Naive thymus-derived CD4-positive, alpha-beta T cell (primary cell): ENCODE measurements at regions of chr11 and their contacts with region 1.

Region 1: DNA sequence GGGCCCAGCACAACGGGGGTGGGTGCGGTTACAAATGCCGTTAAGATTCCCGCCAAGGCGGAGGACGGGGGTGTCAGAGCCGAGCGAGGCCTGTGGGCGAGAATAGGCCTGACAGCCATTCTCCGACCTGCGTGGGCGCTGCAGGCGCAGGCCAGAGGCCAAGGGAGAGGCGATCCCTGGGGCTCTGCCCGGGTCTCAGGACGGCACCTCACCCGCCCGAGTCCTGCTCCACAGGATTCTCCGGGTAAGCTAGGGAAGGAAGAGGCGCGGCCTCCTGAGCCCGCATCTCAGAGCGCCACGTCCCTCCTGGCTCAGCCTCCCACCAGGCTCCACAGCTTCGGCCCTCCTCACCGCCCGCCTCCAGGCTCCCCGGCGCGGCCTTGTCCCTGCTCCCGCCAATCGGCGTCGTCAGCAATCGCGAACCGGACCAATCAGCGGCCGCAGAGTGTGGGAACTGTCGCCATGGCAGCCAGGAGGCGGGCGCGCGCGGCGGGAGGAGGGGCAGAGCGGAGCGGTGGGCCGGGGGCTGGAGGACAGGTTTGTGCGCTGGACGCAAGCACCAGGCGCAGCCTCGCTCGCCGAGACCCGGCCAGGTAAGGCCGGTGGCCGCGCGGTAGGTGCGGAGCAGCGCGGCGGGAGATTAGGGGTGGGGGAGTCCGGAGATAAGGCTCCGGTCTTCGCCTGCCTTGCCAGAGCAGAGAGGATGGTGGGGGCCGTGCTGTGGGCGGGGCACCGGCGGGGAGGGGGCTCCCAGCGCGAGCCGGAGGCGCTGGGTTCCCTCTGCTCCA is at the start of gene NUCB2:
- DNase-seq: peak; percentile 92 to 98 (median 95)
- ATAC-seq: peak; percentile 96
- H3K4me3 ChIP-seq: peak within 1 kb of the TSS; percentile 78
- H3K4me3 Mint-ChIP-seq: peak within 1 kb of the TSS; percentile 83 to 99 (median 93)
- H3K27ac ChIP-seq: peak within 1 kb of the TSS; percentile 90
- H3K27ac Mint-ChIP-seq: peak within 1 kb of the TSS; percentile 88 to 93 (median 91)
- H3K4me1 ChIP-seq: peaks cover 17 to 28% of the 10 kb centered on the region in 2 donors
- H3K4me1 Mint-ChIP-seq: peaks cover 19 to 48% (median 38%) of the 10 kb centered on the region in 7 donors
- H3K27me3 ChIP-seq: no peaks in the 10 kb centered on the region
- H3K27me3 Mint-ChIP-seq: no peaks in the 10 kb centered on the region
- total RNA-seq, gene NUCB2: 72.0 to 171 (median 145) TPM

Region 2: DNA sequence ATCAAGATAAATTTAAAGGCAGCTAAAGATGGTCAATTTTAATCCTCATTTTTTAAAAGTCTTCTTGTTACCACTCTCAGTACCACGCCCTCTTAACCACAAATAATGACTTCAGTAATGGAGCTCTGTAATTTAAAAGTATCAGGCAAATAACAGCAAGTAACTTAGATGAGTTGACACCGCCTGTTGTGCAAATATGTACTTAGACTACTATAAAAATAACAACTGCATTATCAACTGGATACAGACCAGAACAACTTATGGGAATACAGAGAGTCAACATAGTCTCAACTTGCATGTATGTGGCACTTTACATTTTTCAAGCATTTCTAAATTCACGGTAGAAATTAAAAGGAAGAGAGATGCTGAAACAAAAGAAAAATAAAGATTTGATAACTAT is 788.7 kb before region 1 on chr11:
- CTCF ChIA-PET with region 1: no interaction called
- POLR2A ChIA-PET with region 1: no interaction called
- intact Hi-C with region 1: no loop called
- DNase-seq: no peak
- ATAC-seq: no peak
- H3K4me3 ChIP-seq: no peak overlapping the region
- H3K4me3 Mint-ChIP-seq: no peak overlapping the region
- H3K27ac ChIP-seq: no peak overlapping the region
- H3K27ac Mint-ChIP-seq: no peak overlapping the region
- H3K4me1 ChIP-seq: no peaks in the 10 kb centered on the region
- H3K4me1 Mint-ChIP-seq: peaks cover 0 to 2% (median 0%) of the 10 kb centered on the region in 7 donors
- H3K27me3 ChIP-seq: no peaks in the 10 kb centered on the region
- H3K27me3 Mint-ChIP-seq: no peaks in the 10 kb centered on the region

Region 3: GRCh38 chr11:17207317-17208258 is 68.8 kb before region 1 on chr11 and contains the start of gene PIK3C2A:
- CTCF ChIA-PET with region 1: no interaction called
- POLR2A ChIA-PET with region 1: interaction called, 7 read pairs
- intact Hi-C with region 1: loop called (anchors 1 kb)
- DNase-seq: peak; percentile 84 to 94 (median 91)
- ATAC-seq: peak; percentile 98
- H3K4me3 ChIP-seq: peak within 1 kb of the TSS; percentile 93
- H3K4me3 Mint-ChIP-seq: peak within 1 kb of the TSS; percentile 90 to 99 (median 98)
- H3K27ac ChIP-seq: peak within 1 kb of the TSS; percentile 93
- H3K27ac Mint-ChIP-seq: peak within 1 kb of the TSS; percentile 87 to 99 (median 97)
- H3K4me1 ChIP-seq: peaks cover 15 to 19% of the 10 kb centered on the region in 2 donors
- H3K4me1 Mint-ChIP-seq: peaks cover 34 to 57% (median 48%) of the 10 kb centered on the region in 7 donors
- H3K27me3 ChIP-seq: no peaks in the 10 kb centered on the region
- H3K27me3 Mint-ChIP-seq: no peaks in the 10 kb centered on the region
- total RNA-seq, gene PIK3C2A: 25.4 to 56.4 (median 42.0) TPM

Region 4: GRCh38 chr11:17238391-17238790 is 38.0 kb before region 1 on chr11:
- CTCF ChIA-PET with region 1: no interaction called
- POLR2A ChIA-PET with region 1: no interaction called
- intact Hi-C with region 1: no loop called
- DNase-seq: no peak
- ATAC-seq: no peak
- H3K4me3 ChIP-seq: no peak overlapping the region
- H3K4me3 Mint-ChIP-seq: no peak overlapping the region
- H3K27ac ChIP-seq: no peak overlapping the region
- H3K27ac Mint-ChIP-seq: no peak overlapping the region
- H3K4me1 ChIP-seq: no peaks in the 10 kb centered on the region
- H3K4me1 Mint-ChIP-seq: peaks cover 0 to 14% (median 3%) of the 10 kb centered on the region in 7 donors
- H3K27me3 ChIP-seq: no peaks in the 10 kb centered on the region
- H3K27me3 Mint-ChIP-seq: peaks cover 0 to 68% (median 0%) of the 10 kb centered on the region in 5 donors

Region 5: GRCh38 chr11:17287058-17287457 is 10.6 kb after region 1 on chr11:
- CTCF ChIA-PET with region 1: interaction called, 3 read pairs
- POLR2A ChIA-PET with region 1: interaction called, 81 read pairs
- intact Hi-C with region 1: loop called (anchors 1 kb)
- DNase-seq: peak in 1 of 9 donors; percentile 7
- ATAC-seq: no peak
- H3K4me3 ChIP-seq: no peak overlapping the region
- H3K4me3 Mint-ChIP-seq: peak overlapping the region in 9 of 10 donors; percentile 11 to 69 (median 51)
- H3K27ac ChIP-seq: peak overlapping the region; percentile 63
- H3K27ac Mint-ChIP-seq: peak overlapping the region; percentile 52 to 94 (median 88)
- H3K4me1 ChIP-seq: peaks cover 37 to 39% of the 10 kb centered on the region in 2 donors
- H3K4me1 Mint-ChIP-seq: peaks cover 33 to 73% (median 56%) of the 10 kb centered on the region in 7 donors
- H3K27me3 ChIP-seq: no peaks in the 10 kb centered on the region
- H3K27me3 Mint-ChIP-seq: no peaks in the 10 kb centered on the region

Region 6: DNA sequence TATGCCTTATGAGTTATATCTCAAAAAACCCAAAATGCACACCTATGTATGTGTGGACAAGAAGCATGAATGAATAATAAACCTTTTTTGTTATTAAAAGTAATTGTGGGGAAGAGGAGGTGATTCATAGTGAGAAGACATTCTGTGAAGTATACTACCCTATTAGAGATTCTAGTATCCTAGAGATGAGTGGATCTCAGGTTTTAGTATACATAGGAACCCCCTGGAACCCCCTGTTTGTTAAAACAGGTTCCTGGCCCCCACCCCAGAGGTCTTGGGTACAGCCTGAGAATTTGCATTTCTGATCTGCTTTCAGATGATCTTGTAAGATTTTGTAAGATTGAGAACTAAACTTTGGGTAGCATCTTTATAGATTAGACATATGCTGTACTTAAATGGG is 17.6 kb after region 1 on chr11:
- CTCF ChIA-PET with region 1: no interaction called
- POLR2A ChIA-PET with region 1: interaction called, 81 read pairs
- intact Hi-C with region 1: loop called in 1 of 2 experiments (anchors 2 kb)
- DNase-seq: no peak
- ATAC-seq: no peak
- H3K4me3 ChIP-seq: no peak overlapping the region
- H3K4me3 Mint-ChIP-seq: no peak overlapping the region
- H3K27ac ChIP-seq: peak overlapping the region; percentile 9
- H3K27ac Mint-ChIP-seq: peak overlapping the region in 8 of 9 donors; percentile 40 to 81 (median 58)
- H3K4me1 ChIP-seq: peaks cover 3 to 11% of the 10 kb centered on the region in 2 donors
- H3K4me1 Mint-ChIP-seq: peaks cover 15 to 69% (median 57%) of the 10 kb centered on the region in 7 donors
- H3K27me3 ChIP-seq: no peaks in the 10 kb centered on the region
- H3K27me3 Mint-ChIP-seq: no peaks in the 10 kb centered on the region

Region 7: GRCh38 chr11:17389211-17389956 is 113.0 kb after region 1 on chr11:
- CTCF ChIA-PET with region 1: no interaction called
- POLR2A ChIA-PET with region 1: no interaction called
- intact Hi-C with region 1: loop called in 1 of 2 experiments (anchors 1 kb)
- DNase-seq: peak; percentile 57 to 87 (median 80)
- ATAC-seq: peak; percentile 96
- H3K4me3 ChIP-seq: peak overlapping the region; percentile 62
- H3K4me3 Mint-ChIP-seq: peak overlapping the region; percentile 77 to 90 (median 83)
- H3K27ac ChIP-seq: peak overlapping the region; percentile 66
- H3K27ac Mint-ChIP-seq: peak overlapping the region in 7 of 9 donors; percentile 12 to 84 (median 55)
- H3K4me1 ChIP-seq: peaks cover 0 to 4% of the 10 kb centered on the region in 2 donors
- H3K4me1 Mint-ChIP-seq: peaks cover 0 to 9% (median 5%) of the 10 kb centered on the region in 7 donors
- H3K27me3 ChIP-seq: no peaks in the 10 kb centered on the region
- H3K27me3 Mint-ChIP-seq: peaks cover 0 to 16% (median 0%) of the 10 kb centered on the region in 5 donors

Region 8: DNA sequence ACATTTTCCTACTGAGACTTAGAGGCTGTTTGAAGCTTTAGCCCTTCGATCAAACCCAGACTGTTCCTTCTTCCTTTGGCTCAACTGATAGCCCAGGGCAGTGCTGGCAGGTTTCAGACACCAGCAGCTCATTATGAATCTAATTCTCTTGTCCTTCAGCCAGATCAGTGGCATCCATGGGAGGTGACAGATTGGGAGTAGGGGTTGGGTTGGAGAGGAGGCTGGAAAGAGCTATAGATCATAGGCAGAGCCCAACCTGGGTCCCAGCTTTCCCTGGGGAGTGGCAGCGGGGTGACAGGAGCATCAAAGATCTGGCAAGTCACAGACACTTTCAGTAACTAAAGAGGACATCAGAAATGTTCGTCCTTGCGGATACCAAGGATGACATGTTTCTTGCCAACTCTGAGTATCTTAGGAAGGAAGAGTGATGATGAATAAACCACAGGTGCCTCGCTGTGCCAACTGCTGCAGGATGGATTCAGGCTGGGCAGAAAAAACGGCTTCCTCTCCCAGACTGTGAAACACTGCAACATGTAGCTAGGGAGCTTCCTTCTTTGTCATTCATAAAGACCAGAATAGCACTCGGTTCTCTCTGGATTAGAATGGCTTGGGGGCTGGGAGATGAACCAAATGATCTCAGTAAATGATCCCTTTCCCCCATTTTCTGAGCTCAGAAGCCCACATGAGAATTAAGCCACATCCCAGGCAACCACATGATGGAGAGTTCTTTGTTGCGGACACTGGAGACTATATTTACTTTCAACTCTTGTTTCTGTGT is 181.2 kb after region 1 on chr11:
- CTCF ChIA-PET with region 1: no interaction called
- POLR2A ChIA-PET with region 1: no interaction called
- intact Hi-C with region 1: no loop called
- DNase-seq: no peak
- ATAC-seq: no peak
- H3K4me3 ChIP-seq: no peak overlapping the region
- H3K4me3 Mint-ChIP-seq: no peak overlapping the region
- H3K27ac ChIP-seq: no peak overlapping the region
- H3K27ac Mint-ChIP-seq: no peak overlapping the region
- H3K4me1 ChIP-seq: no peaks in the 10 kb centered on the region
- H3K4me1 Mint-ChIP-seq: peaks cover 0 to 1% (median 0%) of the 10 kb centered on the region in 7 donors
- H3K27me3 ChIP-seq: no peaks in the 10 kb centered on the region
- H3K27me3 Mint-ChIP-seq: peaks cover 0 to 19% (median 6%) of the 10 kb centered on the region in 5 donors